CD8-positive, alpha-beta T cell (primary cell): ENCODE measurements at regions of chr16 and their contacts with region 1.

Region 1: GRCh38 chr16:89549007-89549700 is 11.3 kb upstream of the RPL13 start:
- DNase-seq: peak in 6 of 9 experiments; percentile 32 to 76 (median 54)
- ATAC-seq: peak; percentile 83
- H3K4me3 ChIP-seq: peak overlapping the region in 1 of 2 experiments; percentile 13
- H3K4me3 Mint-ChIP-seq: peak overlapping the region; percentile 67
- H3K27ac ChIP-seq: peak overlapping the region; percentile 5 to 33
- H3K27ac Mint-ChIP-seq: peak overlapping the region; percentile 93
- H3K4me1 ChIP-seq: peaks cover 23% of the 10 kb centered on the region
- H3K4me1 Mint-ChIP-seq: peaks cover 23% of the 10 kb centered on the region
- H3K27me3 ChIP-seq: no peaks in the 10 kb centered on the region
- H3K27me3 Mint-ChIP-seq: no peaks in the 10 kb centered on the region
- CTCF ChIP-seq: no peak

Region 2: GRCh38 chr16:89534252-89534756 is 14.8 kb before region 1 on chr16:
- CTCF ChIA-PET with region 1: interaction called, 5 read pairs
- POLR2A ChIA-PET with region 1: interaction called, 10 read pairs
- intact Hi-C with region 1: loop called in 1 of 2 experiments (anchors 1 kb)
- DNase-seq: peak; percentile 6 to 78 (median 59)
- ATAC-seq: peak; percentile 93
- H3K4me3 ChIP-seq: peak overlapping the region in 1 of 2 experiments; percentile 7
- H3K4me3 Mint-ChIP-seq: peak overlapping the region; percentile 55
- H3K27ac ChIP-seq: peak overlapping the region; percentile 9 to 49
- H3K27ac Mint-ChIP-seq: peak overlapping the region; percentile 94
- H3K4me1 ChIP-seq: peaks cover 24% of the 10 kb centered on the region
- H3K4me1 Mint-ChIP-seq: peaks cover 25% of the 10 kb centered on the region
- H3K27me3 ChIP-seq: no peaks in the 10 kb centered on the region
- H3K27me3 Mint-ChIP-seq: no peaks in the 10 kb centered on the region
- CTCF ChIP-seq: no peak